ENCODE measurements at regions of chr6 and their contacts with region 1.

Region 1: DNA sequence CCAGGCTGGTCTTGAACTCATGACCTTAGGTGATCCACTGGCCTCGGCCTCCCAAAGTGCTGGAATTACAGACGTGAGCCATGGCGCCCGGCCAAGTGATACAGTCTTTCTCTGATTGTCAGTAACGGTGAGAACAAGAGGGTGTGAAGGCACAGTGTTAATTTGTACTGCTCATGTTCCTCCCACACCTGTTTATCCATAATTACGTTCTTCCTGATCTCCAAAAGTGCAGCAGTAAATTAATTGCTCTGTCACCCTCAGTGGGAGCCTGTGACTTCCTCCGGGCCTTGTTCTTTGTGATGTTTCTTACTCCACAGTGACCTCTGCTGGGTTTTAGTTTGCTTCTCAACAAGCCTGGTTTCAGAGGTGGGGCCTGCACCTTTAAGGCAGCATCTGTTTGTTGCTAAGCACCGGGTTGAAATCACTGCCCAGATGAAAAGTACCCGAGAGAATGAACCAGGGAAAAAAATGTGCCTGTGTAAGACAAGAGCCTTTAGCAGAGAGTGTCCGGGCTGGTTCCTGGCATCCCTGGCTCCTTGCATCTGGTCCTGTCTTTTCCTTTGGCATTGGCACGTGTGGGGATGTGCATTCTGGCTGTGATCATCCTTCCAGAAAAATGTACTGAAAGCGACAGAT is 89.1 kb upstream of the CLDN20 start:
- DNase-seq: peak; percentile 65 to 72
- H3K4me3 ChIP-seq: no peak overlapping the region
- H3K4me3 Mint-ChIP-seq: no peak overlapping the region
- H3K27ac Mint-ChIP-seq: no peak overlapping the region
- H3K4me1 ChIP-seq: no peaks in the 10 kb centered on the region
- H3K4me1 Mint-ChIP-seq: peaks cover 7% of the 10 kb centered on the region
- H3K27me3 ChIP-seq: no peaks in the 10 kb centered on the region
- H3K27me3 Mint-ChIP-seq: no peaks in the 10 kb centered on the region
- CTCF ChIP-seq: peak; percentile 54 to 58

Region 2: GRCh38 chr6:154675602-154676088 is 499.0 kb before region 1 on chr6:
- CTCF ChIA-PET with region 1: no interaction called
- POLR2A ChIA-PET with region 1: no interaction called
- intact Hi-C with region 1: loop called (anchors 1 kb)
- DNase-seq: peak; percentile 86 to 88
- H3K4me3 ChIP-seq: no peak overlapping the region
- H3K4me3 Mint-ChIP-seq: no peak overlapping the region
- H3K27ac Mint-ChIP-seq: no peak overlapping the region
- H3K4me1 ChIP-seq: no peaks in the 10 kb centered on the region
- H3K4me1 Mint-ChIP-seq: no peaks in the 10 kb centered on the region
- H3K27me3 ChIP-seq: no peaks in the 10 kb centered on the region
- H3K27me3 Mint-ChIP-seq: no peaks in the 10 kb centered on the region
- CTCF ChIP-seq: peak; percentile 95 to 98

Region 3: GRCh38 chr6:154928325-154928922 is 246.3 kb before region 1 on chr6:
- CTCF ChIA-PET with region 1: no interaction called
- POLR2A ChIA-PET with region 1: no interaction called
- intact Hi-C with region 1: loop called (anchors 1 kb)
- DNase-seq: peak; percentile 47 to 71
- H3K4me3 ChIP-seq: no peak overlapping the region
- H3K4me3 Mint-ChIP-seq: no peak overlapping the region
- H3K27ac Mint-ChIP-seq: no peak overlapping the region
- H3K4me1 ChIP-seq: peaks cover 25% of the 10 kb centered on the region
- H3K4me1 Mint-ChIP-seq: peaks cover 21% of the 10 kb centered on the region
- H3K27me3 ChIP-seq: no peaks in the 10 kb centered on the region
- H3K27me3 Mint-ChIP-seq: no peaks in the 10 kb centered on the region
- CTCF ChIP-seq: peak; percentile 74 to 77

Region 4: DNA sequence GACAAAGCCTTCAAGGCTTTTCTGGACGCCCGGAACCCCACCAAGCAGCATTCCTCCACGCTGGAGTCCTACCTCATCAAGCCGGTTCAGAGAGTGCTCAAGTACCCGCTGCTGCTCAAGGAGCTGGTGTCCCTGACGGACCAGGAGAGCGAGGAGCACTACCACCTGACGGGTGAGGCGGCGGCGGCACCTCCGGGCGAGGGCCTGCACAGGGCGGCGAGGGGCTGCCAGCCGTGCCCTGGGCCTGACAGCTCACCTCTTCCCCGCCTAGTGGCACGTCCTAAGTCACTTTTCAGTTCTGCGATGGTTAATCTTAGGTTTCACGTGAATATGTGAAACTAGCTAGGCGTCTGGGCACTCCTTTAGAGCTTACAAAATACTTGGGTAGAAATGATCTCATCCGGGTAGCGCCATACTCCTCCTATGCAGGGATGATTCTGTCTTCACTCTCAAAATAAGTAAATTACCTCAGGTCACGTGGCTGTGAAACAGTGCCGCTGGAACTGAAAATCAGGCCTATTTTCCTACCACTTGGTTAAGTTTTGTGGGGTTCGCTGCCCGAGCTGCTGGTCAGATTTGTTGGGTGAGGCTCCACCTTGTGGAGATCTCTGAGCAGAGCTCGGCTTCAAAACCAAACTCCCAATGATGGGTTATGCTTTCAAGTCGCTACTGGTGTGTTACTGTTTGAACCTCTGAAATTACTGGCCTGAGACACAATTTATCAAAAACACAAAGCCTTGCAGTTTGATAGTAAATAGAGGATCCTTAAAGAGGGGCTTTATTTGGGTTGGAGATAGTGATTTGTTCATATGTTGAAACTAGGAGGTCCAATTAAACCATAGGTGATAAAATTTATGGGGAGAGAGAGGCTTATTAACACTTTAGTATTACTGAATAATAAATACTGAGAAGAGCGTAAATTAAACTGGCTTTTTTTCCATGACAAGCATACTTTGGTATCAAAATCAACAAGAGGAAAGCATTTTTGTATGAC is 73.6 kb after region 1 on chr6:
- CTCF ChIA-PET with region 1: interaction called, 53 read pairs
- POLR2A ChIA-PET with region 1: interaction called, 3 read pairs
- intact Hi-C with region 1: loop called (anchors 1 kb)
- DNase-seq: peak; percentile 54 to 55
- H3K4me3 ChIP-seq: no peak overlapping the region
- H3K4me3 Mint-ChIP-seq: no peak overlapping the region
- H3K27ac Mint-ChIP-seq: peak overlapping the region; percentile 69
- H3K4me1 ChIP-seq: peaks cover 21% of the 10 kb centered on the region
- H3K4me1 Mint-ChIP-seq: peaks cover 11% of the 10 kb centered on the region
- H3K27me3 ChIP-seq: no peaks in the 10 kb centered on the region
- H3K27me3 Mint-ChIP-seq: no peaks in the 10 kb centered on the region
- CTCF ChIP-seq: peak; percentile 53 to 66

Region 5: DNA sequence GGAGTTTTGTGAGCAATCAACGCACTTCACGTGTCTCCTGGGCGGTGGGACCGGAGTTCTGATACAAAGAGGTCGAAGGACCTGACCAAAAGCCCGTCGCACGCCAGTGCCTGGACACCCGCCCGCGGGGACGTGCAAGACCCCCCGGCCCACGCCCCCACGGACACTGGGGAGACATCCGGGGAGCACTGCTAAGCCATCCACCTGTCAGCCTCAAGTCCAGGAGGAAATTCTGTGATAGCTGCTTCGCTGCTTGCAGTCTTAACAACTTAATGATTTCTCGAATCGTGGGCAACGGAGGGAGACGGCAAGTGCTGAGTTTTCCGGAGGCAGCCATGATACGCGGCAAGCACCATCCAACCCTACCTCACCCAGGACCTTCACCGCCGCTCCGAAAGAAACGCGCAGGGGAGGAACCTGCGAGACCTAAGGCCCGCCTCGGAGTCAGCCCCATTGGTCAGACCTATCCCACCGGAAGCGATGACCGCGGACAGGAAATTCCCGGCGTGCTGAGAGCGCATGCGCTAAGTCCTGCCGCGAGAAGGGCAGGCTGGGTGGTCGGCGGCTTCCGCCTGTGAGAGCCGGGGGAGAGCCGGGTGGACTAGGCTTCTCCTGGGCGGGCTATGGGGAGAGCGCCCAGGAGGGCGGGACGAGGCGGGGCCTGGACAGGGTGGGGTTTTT is 139.5 kb after region 1 on chr6 and contains the start of gene TFB1M:
- CTCF ChIA-PET with region 1: no interaction called
- POLR2A ChIA-PET with region 1: no interaction called
- intact Hi-C with region 1: loop called (anchors 2 kb)
- DNase-seq: peak; percentile 99
- H3K4me3 ChIP-seq: peak within 1 kb of the TSS; percentile 70
- H3K4me3 Mint-ChIP-seq: peak within 1 kb of the TSS; percentile 89
- H3K27ac Mint-ChIP-seq: peak within 1 kb of the TSS; percentile 86
- H3K4me1 ChIP-seq: no peaks in the 10 kb centered on the region
- H3K4me1 Mint-ChIP-seq: peaks cover 2% of the 10 kb centered on the region
- H3K27me3 ChIP-seq: no peaks in the 10 kb centered on the region
- H3K27me3 Mint-ChIP-seq: no peaks in the 10 kb centered on the region
- CTCF ChIP-seq: no peak
- total RNA-seq, gene TFB1M: 35.7 and 38.4 TPM in 2 replicates

Region 6: DNA sequence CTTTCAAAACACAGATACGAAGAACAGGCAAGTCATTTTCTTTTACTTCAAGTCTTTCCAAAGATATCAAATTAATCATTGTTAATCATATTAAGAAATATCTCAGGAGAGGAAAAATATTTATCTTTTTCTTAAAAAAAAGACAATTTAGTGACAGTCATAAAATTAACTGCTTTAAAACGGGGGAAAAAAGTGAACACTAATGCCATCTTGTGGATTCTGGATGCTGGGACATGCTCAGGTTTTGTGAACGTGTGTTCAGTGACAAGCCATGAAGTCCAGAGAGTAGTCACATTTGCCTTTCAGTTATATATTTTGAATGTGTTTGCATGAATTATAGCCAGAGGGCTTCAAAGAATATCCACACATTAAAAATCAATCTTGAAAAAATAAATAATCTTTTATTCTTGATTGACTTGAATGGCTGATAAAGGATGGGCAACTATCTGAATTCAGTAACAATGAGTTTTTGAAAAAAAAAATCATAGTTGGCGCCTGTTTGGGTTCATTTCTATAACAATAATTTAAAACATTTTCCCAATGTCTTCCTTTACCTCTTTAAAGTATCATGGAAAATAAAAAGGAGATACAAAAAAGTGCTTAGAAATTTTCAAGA is 355.6 kb after region 1 on chr6:
- CTCF ChIA-PET with region 1: no interaction called
- POLR2A ChIA-PET with region 1: no interaction called
- intact Hi-C with region 1: loop called (anchors 1 kb)
- DNase-seq: peak in 1 of 2 experiments; percentile 36
- H3K4me3 ChIP-seq: no peak overlapping the region
- H3K4me3 Mint-ChIP-seq: no peak overlapping the region
- H3K27ac Mint-ChIP-seq: no peak overlapping the region
- H3K4me1 ChIP-seq: peaks cover 9% of the 10 kb centered on the region
- H3K4me1 Mint-ChIP-seq: no peaks in the 10 kb centered on the region
- H3K27me3 ChIP-seq: no peaks in the 10 kb centered on the region
- H3K27me3 Mint-ChIP-seq: no peaks in the 10 kb centered on the region
- CTCF ChIP-seq: peak; percentile 58 to 76